ENCODE measurements at regions of chr1 and their contacts with region 1.

Region 1: DNA sequence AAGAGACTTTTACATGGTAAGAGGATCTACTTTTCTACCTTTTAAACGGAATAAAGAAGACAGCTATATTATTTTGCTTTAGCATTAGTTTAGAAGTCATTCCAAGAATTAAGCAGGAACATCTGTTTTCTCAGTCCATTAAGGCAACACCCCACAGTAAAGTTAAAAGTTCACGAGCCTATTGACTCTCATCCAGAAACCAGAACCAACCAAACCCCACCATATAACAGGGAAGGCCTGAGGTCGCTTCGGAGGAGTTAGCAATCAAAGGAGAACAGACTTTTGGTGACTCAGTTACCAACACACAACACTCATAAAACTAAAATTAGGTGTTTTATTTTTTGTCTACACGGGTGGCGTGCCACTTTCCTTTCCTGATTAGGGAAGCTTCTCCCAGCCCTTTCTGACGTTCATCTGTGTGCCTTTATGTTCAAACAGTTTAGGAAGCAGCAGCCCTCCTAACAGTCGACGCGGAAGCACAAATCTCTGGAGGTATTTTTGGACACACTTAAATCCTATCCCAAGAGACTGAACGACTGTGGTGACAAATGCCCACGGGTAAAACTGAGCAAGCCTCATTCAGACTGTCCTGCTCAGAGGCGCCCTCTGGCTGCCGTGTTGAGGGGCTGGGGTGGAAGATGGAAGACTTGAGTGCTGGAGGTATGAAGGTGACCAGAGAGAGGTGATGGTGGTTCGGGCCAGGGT is 8.6 kb upstream of the PLA2G2C start:
- DNase-seq: peak; percentile 57
- H3K4me3 ChIP-seq: no peak overlapping the region
- H3K27ac ChIP-seq: no peak overlapping the region
- H3K4me1 ChIP-seq: no peaks in the 10 kb centered on the region
- H3K27me3 ChIP-seq: peaks cover 7 to 13% of the 10 kb centered on the region in 2 experiments
- CTCF ChIP-seq: peak; percentile 84 to 89
- POLR2A ChIP-seq: no peak

Region 2: GRCh38 chr1:19974822-19975416 is 220.0 kb before region 1 on chr1:
- CTCF ChIA-PET with region 1: interaction called, 54 read pairs
- POLR2A ChIA-PET with region 1: no interaction called
- dilution Hi-C with region 1: no loop called
- intact Hi-C with region 1: loop called (anchors 1 kb)
- DNase-seq: peak; percentile 69
- H3K4me3 ChIP-seq: no peak overlapping the region
- H3K27ac ChIP-seq: no peak overlapping the region
- H3K4me1 ChIP-seq: no peaks in the 10 kb centered on the region
- H3K27me3 ChIP-seq: peaks cover 0 to 2% of the 10 kb centered on the region in 2 experiments
- CTCF ChIP-seq: peak; percentile 64 to 69
- POLR2A ChIP-seq: no peak

Region 3: DNA sequence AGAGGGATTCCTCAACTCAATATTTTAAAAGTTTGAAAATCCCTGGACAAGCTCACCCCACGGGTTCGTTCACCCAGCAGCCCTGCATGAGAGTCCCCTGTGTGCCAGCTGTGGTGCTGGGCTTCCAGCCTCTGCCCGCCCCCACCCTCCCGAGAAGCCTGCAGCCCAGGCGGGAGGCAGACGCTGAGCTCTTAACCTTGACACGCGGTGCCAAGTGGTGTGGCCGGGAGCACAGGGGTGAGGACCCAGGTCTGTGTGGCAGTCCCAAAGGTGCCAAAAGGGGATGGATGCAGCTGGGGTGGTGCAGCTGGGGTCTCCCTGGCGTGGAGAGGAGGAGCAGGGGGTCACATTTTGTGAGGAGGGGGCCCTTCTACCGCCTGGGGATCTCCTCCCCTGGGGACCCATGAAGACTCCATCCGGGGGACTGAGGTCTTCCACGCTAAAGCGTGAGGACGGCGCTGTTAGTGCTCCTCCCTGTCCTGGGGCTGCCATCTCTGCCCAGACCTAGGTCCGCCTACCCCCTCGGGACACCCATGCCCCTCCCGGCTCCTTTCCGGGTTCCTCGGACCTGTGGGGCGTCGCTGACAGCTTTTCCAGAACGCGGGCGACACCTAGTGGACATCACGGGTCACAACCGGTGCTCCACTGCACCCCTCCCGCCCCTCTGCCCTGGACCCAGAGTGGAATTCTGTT is 42.9 kb before region 1 on chr1:
- CTCF ChIA-PET with region 1: interaction called, 11 read pairs
- POLR2A ChIA-PET with region 1: no interaction called
- dilution Hi-C with region 1: no loop called
- intact Hi-C with region 1: no loop called
- DNase-seq: peak; percentile 42
- H3K4me3 ChIP-seq: peak overlapping the region in 1 of 3 experiments; percentile 7
- H3K27ac ChIP-seq: no peak overlapping the region
- H3K4me1 ChIP-seq: peaks cover 4% of the 10 kb centered on the region
- H3K27me3 ChIP-seq: no peaks in the 10 kb centered on the region
- CTCF ChIP-seq: peak; percentile 87 to 91
- POLR2A ChIP-seq: no peak

Region 4: DNA sequence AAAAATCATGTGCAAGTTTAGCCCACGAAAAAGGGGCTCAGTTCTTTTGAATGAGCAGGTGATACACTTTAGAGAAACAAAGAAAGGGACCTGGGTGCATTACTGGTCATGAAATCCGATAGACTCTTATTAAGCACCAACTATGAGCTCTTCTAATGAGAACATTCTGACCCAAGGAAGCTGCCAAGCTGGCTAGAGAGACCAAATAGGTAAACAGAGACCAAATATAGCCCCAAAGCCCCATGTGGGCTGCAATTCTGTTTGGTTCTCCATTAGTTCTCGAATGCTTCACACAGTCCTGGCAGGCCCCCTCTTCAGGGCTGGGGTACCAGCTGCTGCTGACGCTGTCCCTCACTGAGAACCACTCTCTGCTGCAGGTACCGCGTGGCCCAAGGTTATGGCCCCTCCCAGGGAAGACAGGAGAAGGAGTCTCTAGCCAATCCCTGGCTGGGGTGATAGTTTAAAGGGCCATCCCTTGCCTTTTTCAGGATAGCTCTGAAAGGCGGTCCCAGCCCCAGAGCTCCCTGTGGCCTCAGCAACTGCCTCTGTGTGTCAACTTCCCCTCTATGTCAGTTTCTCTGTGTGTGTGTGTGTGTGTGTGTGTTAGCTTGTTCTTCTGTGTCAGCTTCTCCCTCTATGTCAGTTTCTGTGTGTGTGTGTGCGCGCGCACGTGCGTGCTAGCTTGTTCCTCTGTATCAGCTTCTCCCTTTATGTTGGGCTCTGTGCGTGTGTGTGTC is 16.1 kb before region 1 on chr1:
- CTCF ChIA-PET with region 1: interaction called, 16 read pairs
- POLR2A ChIA-PET with region 1: no interaction called
- dilution Hi-C with region 1: no loop called
- intact Hi-C with region 1: no loop called
- DNase-seq: no peak
- H3K4me3 ChIP-seq: no peak overlapping the region
- H3K27ac ChIP-seq: no peak overlapping the region
- H3K4me1 ChIP-seq: no peaks in the 10 kb centered on the region
- H3K27me3 ChIP-seq: peaks cover 4 to 6% of the 10 kb centered on the region in 2 experiments
- CTCF ChIP-seq: no peak
- POLR2A ChIP-seq: no peak

Region 5: DNA sequence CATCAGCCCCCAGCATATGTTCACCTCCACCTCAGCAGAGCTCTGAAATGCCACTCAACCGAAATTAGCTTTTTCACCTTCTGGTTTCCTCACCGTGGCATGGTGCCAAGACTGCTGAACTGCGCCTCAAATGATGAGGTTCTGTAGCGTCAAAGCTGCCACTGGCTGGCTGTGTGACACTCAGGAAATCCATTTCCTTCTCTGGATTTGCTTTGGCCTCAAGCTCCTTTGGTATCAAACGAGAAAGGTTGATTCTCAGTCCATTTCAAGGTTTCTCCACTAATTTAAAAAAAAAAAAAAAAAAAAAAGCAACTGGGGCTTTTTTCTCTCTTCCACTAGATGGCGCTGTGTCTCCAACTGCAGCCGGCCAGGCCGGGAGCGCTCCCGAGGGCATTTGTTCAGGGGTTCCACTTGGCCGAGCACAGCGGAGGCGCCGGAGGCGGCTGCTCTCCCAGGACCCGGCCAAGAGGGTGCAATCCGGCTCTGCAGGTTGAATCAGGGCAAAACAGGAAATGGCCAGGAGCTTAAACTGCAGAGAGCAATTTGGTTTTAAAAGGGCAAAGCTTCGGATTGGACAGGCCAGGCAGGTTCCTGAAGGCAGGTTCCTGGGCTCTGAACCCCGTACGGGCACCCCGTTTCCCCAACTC is 17.9 kb after region 1 on chr1:
- CTCF ChIA-PET with region 1: interaction called, 10 read pairs
- POLR2A ChIA-PET with region 1: no interaction called
- dilution Hi-C with region 1: no loop called
- intact Hi-C with region 1: no loop called
- DNase-seq: peak; percentile 39
- H3K4me3 ChIP-seq: no peak overlapping the region
- H3K27ac ChIP-seq: no peak overlapping the region
- H3K4me1 ChIP-seq: no peaks in the 10 kb centered on the region
- H3K27me3 ChIP-seq: peaks cover 7% of the 10 kb centered on the region in 2 experiments
- CTCF ChIP-seq: peak; percentile 76 to 79
- POLR2A ChIP-seq: no peak